ENCODE measurements at regions of chr1 and their contacts with region 1.

Region 1: GRCh38 chr1:227131193-227131592 is 187.1 kb downstream of the CDC42BPA start:
- DNase-seq: no peak
- ATAC-seq: no peak
- H3K4me3 ChIP-seq: no peak overlapping the region
- H3K4me1 ChIP-seq: no peaks in the 10 kb centered on the region
- CTCF ChIP-seq: no peak

Region 2: GRCh38 chr1:227449051-227449450 is 317.9 kb after region 1 on chr1:
- intact Hi-C with region 1: loop called in 1 of 2 experiments (anchors 10 kb)
- DNase-seq: peak in 1 of 3 donors; percentile 25
- ATAC-seq: peak; percentile 66
- H3K4me3 ChIP-seq: no peak overlapping the region
- H3K4me1 ChIP-seq: no peaks in the 10 kb centered on the region
- CTCF ChIP-seq: no peak

Region 3: DNA sequence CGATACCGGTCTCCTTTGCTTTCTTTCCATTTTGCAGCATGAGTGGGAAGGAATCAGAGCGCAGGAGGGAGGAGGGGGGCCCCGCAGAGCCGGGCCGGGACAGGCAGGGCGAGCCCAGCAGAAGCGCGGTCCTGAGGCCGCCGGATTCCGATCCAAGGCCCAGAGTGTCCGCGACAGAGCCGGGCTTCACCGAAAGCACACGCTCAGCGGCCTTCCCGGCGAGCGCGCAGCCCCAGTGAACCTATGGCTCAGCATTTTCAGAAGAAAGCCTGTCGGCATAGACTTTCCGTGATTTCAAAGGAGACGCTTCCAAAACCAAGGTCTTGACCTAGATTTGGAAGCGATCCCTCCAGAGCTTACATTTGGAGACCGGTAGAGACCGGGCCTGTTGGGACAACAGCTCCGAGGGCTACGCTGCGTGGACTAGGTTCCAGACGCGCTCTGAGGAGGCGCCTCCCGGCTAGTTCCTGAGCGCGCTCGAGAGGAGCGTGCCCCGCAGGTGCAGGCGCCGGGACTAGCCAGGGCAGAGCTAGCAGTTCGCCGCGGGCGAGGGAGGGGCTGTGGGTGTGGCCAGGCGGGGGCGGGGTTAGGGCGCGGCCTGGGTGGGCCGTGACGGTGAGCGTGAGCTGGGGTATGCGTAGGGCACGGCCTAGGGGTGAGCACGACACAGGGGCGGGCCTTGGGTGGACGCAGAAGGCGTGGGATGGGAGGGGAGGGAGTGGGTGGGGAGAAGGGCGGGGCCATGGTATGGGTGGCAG is 656.5 kb after region 1 on chr1:
- intact Hi-C with region 1: no loop called
- DNase-seq: peak; percentile 95 to 99 (median 98)
- ATAC-seq: peak; percentile 92
- H3K4me3 ChIP-seq: peak overlapping the region; percentile 11
- H3K4me1 ChIP-seq: peaks cover 19% of the 10 kb centered on the region
- CTCF ChIP-seq: no peak

Measured in mucosa of descending colon (tissue), 3 donors.